ENCODE measurements at regions of chr17 and their contacts with region 1.

Region 1: GRCh38 chr17:73192894-73193701 is at the start of gene COG1:
- DNase-seq: peak; percentile 100
- H3K4me3 ChIP-seq: peak within 1 kb of the TSS; percentile 73 to 76
- H3K27ac ChIP-seq: peak within 1 kb of the TSS; percentile 85 to 95
- H3K4me1 ChIP-seq: peaks cover 5 to 8% of the 10 kb centered on the region in 2 experiments; a peak in 2 of 4 replicates
- H3K27me3 ChIP-seq: no peaks in the 10 kb centered on the region
- CTCF ChIP-seq: no peak
- EP300 ChIP-seq: no peak
- RAD21 ChIP-seq: no peak
- polyA plus RNA-seq, gene COG1: 52.8 and 53.1 TPM in 2 replicates

Region 2: DNA sequence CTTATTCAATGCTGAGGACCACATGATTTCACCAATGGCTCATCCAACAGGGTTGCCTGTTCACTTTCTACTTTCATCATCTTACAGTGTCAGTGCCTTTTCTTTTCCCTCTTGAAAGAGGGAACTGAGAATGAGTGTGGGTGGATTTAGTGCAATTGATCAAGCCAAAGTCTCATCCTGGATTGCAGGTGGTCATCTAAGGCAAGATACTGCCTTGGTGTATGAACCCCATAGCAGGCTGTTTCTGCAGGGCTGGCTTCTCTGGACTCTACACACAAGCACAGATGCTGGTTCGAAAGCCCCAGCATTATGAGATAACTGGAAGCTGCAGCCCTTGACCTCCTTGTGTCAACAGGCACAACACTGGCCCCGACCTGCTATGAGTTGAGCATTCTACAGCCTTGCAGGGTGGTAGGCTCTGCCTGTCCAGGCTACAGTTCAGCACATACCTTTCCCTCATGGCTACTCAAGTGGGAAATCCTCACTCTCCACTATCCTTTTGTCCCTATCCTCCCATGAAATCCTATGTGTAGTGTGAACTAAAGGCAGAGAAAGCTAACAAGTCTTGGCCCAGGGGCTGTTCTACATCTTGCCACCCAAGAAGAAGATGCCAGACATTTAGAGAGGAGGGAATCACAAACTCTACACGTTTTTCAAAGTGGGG is 459.3 kb before region 1 on chr17:
- CTCF ChIA-PET with region 1: interaction called, 501 read pairs
- POLR2A ChIA-PET with region 1: interaction called, 9 read pairs
- DNase-seq: no peak
- H3K4me3 ChIP-seq: no peak overlapping the region
- H3K27ac ChIP-seq: no peak overlapping the region
- H3K4me1 ChIP-seq: no peaks in the 10 kb centered on the region
- H3K27me3 ChIP-seq: no peaks in the 10 kb centered on the region
- CTCF ChIP-seq: no peak
- EP300 ChIP-seq: no peak
- RAD21 ChIP-seq: no peak

Region 3: DNA sequence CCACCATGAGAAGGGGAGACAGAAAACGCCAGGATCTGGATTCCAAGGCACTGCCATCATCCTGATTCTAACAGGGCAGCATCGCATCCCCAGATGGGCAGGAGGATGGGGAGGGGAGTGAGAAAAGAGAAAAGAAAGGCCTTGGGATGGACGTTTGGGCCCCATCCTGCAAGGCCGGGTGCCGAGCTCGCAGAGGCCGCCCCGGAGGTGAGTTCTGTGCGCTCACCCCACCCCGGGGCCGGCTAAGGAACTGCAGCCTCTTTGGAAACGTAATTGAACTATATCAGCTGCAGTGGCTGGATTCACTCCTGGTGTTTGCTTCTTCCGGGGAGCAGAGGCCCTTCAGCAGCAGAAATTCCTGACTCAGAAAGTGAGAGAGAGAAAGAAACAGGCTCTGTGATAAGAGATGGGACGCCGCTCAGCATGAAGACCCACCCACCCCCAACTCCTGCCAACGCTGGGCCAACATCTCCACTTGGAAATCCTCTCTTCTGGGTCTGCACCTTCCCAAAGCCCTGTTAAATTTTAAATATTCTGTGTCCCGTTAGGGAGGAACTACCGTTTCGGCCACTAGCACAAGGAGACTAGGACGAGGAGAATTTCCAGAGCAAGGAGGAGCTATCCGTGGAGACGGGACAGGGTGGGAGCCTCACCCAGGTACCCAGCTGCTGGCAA is 36.8 kb before region 1 on chr17:
- CTCF ChIA-PET with region 1: interaction called, 62 read pairs
- POLR2A ChIA-PET with region 1: no interaction called
- DNase-seq: peak; percentile 92
- H3K4me3 ChIP-seq: peak overlapping the region in 1 of 2 experiments; percentile 31; a peak in 2 of 4 replicates
- H3K27ac ChIP-seq: peak overlapping the region in 1 of 2 experiments; percentile 45; a peak in 1 of 4 replicates
- H3K4me1 ChIP-seq: peaks cover 6 to 22% of the 10 kb centered on the region in 2 experiments; a peak in 1 of 4 replicates
- H3K27me3 ChIP-seq: no peaks in the 10 kb centered on the region
- CTCF ChIP-seq: peak; percentile 89
- EP300 ChIP-seq: 0 out of 4 replicates have a peak, but pooled peaks have one; percentile 9 to 24
- RAD21 ChIP-seq: peak; percentile 90

Region 4: DNA sequence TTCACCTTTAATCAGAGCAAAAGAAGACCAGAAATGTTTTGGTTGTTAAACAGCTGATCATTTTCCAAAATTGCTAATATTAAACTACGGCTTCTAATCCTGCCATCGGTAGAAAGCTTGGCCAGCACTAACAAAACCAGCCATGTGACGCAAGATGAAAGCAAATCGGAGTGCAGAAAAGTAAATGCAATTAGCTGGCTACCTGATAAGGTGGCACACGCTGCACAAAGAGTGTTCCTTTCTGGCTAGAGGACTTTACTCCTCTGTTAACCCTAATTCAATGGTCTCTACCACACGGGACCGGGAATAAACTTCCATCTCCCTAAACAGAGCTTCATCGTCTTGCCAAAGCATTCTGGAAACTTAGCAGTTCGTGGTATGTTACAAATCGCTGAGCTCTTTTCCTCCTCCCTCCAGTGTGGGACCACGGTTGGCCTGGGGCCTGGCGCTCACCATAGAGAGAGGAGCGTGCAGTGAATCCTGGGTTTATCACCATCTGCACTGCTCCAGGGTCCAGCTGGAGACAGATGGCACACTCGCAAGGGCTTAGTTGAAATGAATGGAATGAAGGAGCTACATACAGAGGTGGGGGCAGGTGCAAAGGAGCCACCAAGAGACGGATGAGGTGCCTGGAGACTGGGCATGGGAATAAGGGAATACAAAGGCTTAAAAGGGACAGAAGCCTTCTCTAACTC is 10.3 kb before region 1 on chr17:
- CTCF ChIA-PET with region 1: interaction called, 43 read pairs
- POLR2A ChIA-PET with region 1: no interaction called
- DNase-seq: peak; percentile 62
- H3K4me3 ChIP-seq: no peak overlapping the region
- H3K27ac ChIP-seq: 0 out of 4 replicates have a peak overlapping the region, but pooled peaks of 1 of the 2 experiments have one; percentile 8
- H3K4me1 ChIP-seq: peaks cover 0 to 6% of the 10 kb centered on the region in 2 experiments; a peak in 1 of 4 replicates
- H3K27me3 ChIP-seq: no peaks in the 10 kb centered on the region
- CTCF ChIP-seq: no peak
- EP300 ChIP-seq: no peak; a peak in 1 of 4 replicates
- RAD21 ChIP-seq: no peak

Region 5: DNA sequence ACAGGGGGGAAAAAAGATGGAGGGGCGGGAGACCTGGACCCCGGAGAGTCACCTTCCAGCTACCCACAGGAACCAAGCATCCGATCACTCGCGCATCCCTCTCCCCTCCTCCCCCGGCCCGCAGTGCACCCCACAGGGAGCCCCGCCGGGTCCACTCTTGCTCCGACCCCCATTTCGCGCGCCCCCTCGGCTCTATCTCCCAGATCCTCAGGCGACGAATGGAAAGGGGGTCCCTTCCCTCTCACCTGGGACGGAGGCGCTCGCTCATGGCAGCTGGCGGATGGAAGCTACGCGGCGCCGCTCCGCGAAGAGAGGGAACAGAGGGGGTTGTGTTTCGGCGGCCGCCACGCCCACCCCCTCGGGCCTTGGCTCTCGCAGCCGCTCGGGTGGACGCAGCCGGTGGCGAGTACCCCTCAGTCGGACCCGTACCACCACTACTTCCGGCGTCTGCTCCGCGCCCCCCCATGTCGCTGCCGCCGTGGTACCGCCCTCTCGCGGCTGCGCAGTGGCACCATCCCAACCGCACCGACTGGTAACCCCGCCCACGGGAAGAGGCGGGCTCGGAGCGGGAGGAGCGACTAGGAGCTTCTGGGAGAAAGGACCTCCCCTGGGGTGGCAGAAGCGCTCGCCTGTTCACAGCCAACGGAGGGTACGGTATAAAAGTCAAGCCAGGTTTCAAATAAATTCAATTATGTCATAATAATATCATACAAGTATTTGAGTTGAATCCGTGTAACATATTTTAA is 38.9 kb after region 1 on chr17:
- CTCF ChIA-PET with region 1: interaction called, 10 read pairs
- POLR2A ChIA-PET with region 1: interaction called, 14 read pairs
- DNase-seq: peak; percentile 100
- H3K4me3 ChIP-seq: peak overlapping the region; percentile 97 to 98
- H3K27ac ChIP-seq: peak overlapping the region; percentile 59 to 87
- H3K4me1 ChIP-seq: peaks cover 24 to 29% of the 10 kb centered on the region in 2 experiments
- H3K27me3 ChIP-seq: no peaks in the 10 kb centered on the region
- CTCF ChIP-seq: peak; percentile 10; the same call in 1 of the 2 replicates
- EP300 ChIP-seq: peak in 1 of 2 experiments; percentile 47; a peak in 2 of 4 replicates
- RAD21 ChIP-seq: 0 out of 2 replicates have a peak, but pooled peaks have one; percentile 24

Region 6: GRCh38 chr17:73316919-73317505 is 123.9 kb after region 1 on chr17:
- CTCF ChIA-PET with region 1: no interaction called
- POLR2A ChIA-PET with region 1: no interaction called
- DNase-seq: no peak
- H3K4me3 ChIP-seq: no peak overlapping the region
- H3K27ac ChIP-seq: peak overlapping the region in 1 of 2 experiments; percentile 48; a peak in 2 of 4 replicates
- H3K4me1 ChIP-seq: peaks cover 6 to 40% of the 10 kb centered on the region in 2 experiments; a peak in 3 of 4 replicates
- H3K27me3 ChIP-seq: no peaks in the 10 kb centered on the region
- CTCF ChIP-seq: no peak
- EP300 ChIP-seq: no peak
- RAD21 ChIP-seq: no peak

Region 7: GRCh38 chr17:73455050-73455687 is 262.1 kb after region 1 on chr17:
- CTCF ChIA-PET with region 1: no interaction called
- POLR2A ChIA-PET with region 1: no interaction called
- DNase-seq: peak; percentile 67
- H3K4me3 ChIP-seq: no peak overlapping the region
- H3K27ac ChIP-seq: no peak overlapping the region
- H3K4me1 ChIP-seq: peaks cover 0 to 27% of the 10 kb centered on the region in 2 experiments; a peak in 1 of 4 replicates
- H3K27me3 ChIP-seq: no peaks in the 10 kb centered on the region
- CTCF ChIP-seq: no peak
- EP300 ChIP-seq: no peak
- RAD21 ChIP-seq: no peak